ENCODE measurements at regions of chr3 and their contacts with region 1.

Region 1: GRCh38 chr3:155854141-155854940 is at the start of gene SLC33A1:
- DNase-seq: peak; percentile 99 to 100 (median 99)
- ATAC-seq: peak; percentile 98 to 100 (median 98)
- H3K4me3 ChIP-seq: peak within 1 kb of the TSS; percentile 70 to 98 (median 84)
- H3K27ac ChIP-seq: peak within 1 kb of the TSS; percentile 72 to 98 (median 90)
- H3K4me1 ChIP-seq: peaks cover 11 to 48% (median 41%) of the 10 kb centered on the region in 12 donors
- H3K27me3 ChIP-seq: no peaks in the 10 kb centered on the region
- CTCF ChIP-seq: no peak
- POLR2A ChIP-seq: peak in 1 of 2 donors; percentile 67
- total RNA-seq, gene SLC33A1: 14.6 to 30.5 (median 21.6) TPM

Region 2: GRCh38 chr3:155753036-155753639 is 101.2 kb before region 1 on chr3:
- intact Hi-C with region 1: loop called in 1 of 10 experiments (anchors 10 kb)
- DNase-seq: no peak
- ATAC-seq: no peak
- H3K4me3 ChIP-seq: no peak overlapping the region
- H3K27ac ChIP-seq: no peak overlapping the region
- H3K4me1 ChIP-seq: peaks cover 0 to 3% (median 0%) of the 10 kb centered on the region in 12 donors
- H3K27me3 ChIP-seq: no peaks in the 10 kb centered on the region
- CTCF ChIP-seq: peak in 7 of 12 donors; percentile 10 to 43 (median 38)
- POLR2A ChIP-seq: no peak

Region 3: DNA sequence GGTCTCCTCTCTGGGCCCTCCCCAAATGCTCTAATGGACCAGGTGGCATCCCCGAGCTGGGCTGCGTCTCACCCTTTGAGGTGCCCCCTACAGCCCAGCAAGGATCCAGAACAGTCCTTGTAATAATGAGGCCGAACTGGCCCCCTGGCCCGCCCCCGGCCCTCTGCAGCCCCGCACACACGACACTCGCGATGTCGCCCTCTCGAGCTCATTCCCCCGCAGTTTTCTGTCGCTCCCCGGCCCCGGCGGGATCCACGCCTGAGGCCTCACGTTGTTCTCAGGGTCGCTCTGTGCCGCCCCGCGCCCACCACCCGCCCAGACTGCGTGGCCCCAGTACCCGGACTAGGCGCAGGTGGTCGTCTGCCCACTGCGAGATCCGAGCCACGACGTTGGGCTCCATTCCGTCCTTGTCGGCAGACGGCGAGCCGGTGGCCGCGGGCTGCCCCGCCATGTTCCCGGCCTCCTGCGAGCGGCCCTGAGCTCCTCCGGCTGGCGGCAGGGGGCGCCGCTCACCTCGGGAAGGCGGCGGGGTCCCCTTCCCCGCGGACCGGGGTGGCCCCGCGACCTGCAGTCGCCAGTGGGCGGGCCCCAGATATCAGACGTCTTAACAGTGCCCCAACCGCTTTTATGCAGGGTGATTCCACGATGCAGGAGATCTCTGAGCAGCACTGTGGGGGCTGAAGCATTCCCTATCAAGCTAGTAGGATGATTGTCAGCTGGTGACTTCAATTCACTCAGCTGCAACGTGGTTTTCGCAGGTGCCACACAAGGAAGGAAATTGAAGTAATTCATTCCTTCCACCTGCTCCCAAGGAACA is 48.3 kb before region 1 on chr3 and contains the start of gene C3orf33:
- intact Hi-C with region 1: loop called in 7 of 10 experiments (anchors 2 to 10 kb)
- DNase-seq: peak; percentile 69 to 90 (median 77)
- ATAC-seq: peak; percentile 89 to 98 (median 96)
- H3K4me3 ChIP-seq: peak within 1 kb of the TSS; percentile 71 to 87 (median 78)
- H3K27ac ChIP-seq: peak within 1 kb of the TSS; percentile 72 to 93 (median 88)
- H3K4me1 ChIP-seq: peaks cover 0 to 21% (median 5%) of the 10 kb centered on the region in 12 donors
- H3K27me3 ChIP-seq: no peaks in the 10 kb centered on the region
- CTCF ChIP-seq: peak; percentile 81 to 97 (median 90)
- POLR2A ChIP-seq: no peak
- total RNA-seq, gene C3orf33: 3.4 to 8.8 (median 5.8) TPM

Measured in heart left ventricle (tissue), 16 donors.